ENCODE measurements at regions of chr9 and their contacts with region 1.

Region 1: DNA sequence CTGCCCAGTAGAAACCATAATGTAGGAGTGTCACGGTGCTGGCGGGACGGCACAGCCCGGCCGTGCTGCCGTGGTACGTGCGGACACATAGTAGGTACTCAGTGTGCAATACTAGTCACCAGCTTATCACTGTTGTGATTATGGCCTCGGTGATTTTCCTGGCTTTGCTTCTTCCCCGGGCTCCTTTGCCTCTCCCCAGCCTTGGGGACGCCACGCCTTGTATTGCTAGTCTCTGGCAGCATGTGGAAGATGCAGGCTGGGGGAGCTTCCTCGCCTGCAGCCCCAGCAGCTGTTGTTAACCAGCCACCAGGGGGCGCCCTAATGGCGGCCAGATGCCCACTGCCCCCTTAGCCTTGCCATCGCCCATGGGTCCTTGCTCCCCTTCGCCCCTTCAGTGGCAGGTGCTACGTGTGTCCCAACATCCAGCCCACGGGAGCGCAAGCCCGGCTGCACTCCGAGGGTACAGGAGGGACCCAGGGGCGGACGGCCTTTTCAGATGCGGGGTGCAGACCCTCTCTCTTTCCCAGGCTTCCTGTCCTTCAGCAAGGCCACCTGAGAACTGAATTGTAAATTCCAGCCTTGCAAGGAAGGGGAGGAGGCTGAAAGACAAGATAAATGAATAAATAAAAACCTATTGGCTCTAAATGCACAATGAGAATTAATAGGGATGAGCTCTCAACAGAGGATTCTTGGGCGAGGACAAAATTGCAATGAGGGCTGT is 8.0 kb downstream of the NTNG2 start:
- DNase-seq: peak; percentile 58 to 80 (median 79)
- ATAC-seq: peak in 1 of 2 donors; percentile 59
- H3K4me3 ChIP-seq: no peak overlapping the region
- H3K27ac ChIP-seq: no peak overlapping the region
- H3K4me1 ChIP-seq: no peaks in the 10 kb centered on the region
- H3K27me3 ChIP-seq: no peaks in the 10 kb centered on the region

Region 2: DNA sequence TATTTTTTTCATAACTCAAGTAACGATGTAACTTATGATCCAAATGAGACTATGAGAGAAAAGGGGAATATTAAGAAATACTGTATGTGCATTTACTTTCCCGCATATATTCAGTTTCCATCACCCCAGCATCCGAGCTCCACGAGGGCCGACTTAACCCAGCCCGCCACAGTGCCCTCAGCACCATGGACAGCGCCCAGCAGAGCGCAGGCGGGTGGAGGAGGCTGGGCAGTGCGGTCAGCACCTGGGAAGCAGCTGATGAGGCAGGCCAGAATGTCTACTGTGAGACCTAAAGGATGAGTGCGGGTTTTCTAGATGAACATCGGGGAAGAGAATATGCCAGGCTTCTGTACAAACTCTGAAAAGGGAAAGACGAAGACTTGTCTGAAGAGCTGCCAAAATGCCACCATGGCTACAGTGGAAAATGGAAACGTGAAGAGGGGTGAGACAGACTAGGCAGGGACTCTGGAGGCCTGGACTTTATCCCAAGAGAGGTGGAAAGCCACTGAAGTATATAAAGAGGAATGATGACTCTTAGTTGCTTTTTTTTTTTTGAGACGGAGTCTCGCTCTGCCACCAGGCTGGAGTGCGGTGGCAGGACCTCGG is 55.6 kb before region 1 on chr9:
- intact Hi-C with region 1: loop called in 1 of 4 experiments (anchors 10 kb)
- DNase-seq: peak; percentile 64 to 85 (median 85)
- ATAC-seq: peak; percentile 81 to 86
- H3K4me3 ChIP-seq: no peak overlapping the region
- H3K27ac ChIP-seq: no peak overlapping the region
- H3K4me1 ChIP-seq: no peaks in the 10 kb centered on the region
- H3K27me3 ChIP-seq: peaks cover 3% of the 10 kb centered on the region

Region 3: GRCh38 chr9:132240753-132241493 is 71.1 kb after region 1 on chr9:
- intact Hi-C with region 1: loop called in 3 of 4 experiments (anchors 2 to 5 kb)
- DNase-seq: peak; percentile 98 to 100 (median 99)
- ATAC-seq: peak; percentile 95
- H3K4me3 ChIP-seq: peak overlapping the region; percentile 91
- H3K27ac ChIP-seq: no peak overlapping the region
- H3K4me1 ChIP-seq: no peaks in the 10 kb centered on the region
- H3K27me3 ChIP-seq: no peaks in the 10 kb centered on the region